Vagina (tissue), 2 donors: ENCODE measurements at regions of chr12 and their contacts with region 1.

Region 1: GRCh38 chr12:40723001-40723400 is 30.8 kb downstream of the CNTN1 start:
- DNase-seq: no peak
- H3K4me3 ChIP-seq: no peak overlapping the region
- H3K27ac ChIP-seq: no peak overlapping the region
- H3K4me1 ChIP-seq: no peaks in the 10 kb centered on the region
- H3K27me3 ChIP-seq: no peaks in the 10 kb centered on the region
- CTCF ChIP-seq: no peak
- POLR2A ChIP-seq: no peak

Region 2: GRCh38 chr12:42356344-42356743 is 1633.3 kb after region 1 on chr12:
- intact Hi-C with region 1: loop called (anchors 5 kb)
- DNase-seq: no peak
- H3K4me3 ChIP-seq: no peak overlapping the region
- H3K27ac ChIP-seq: no peak overlapping the region
- H3K4me1 ChIP-seq: no peaks in the 10 kb centered on the region
- H3K27me3 ChIP-seq: no peaks in the 10 kb centered on the region
- CTCF ChIP-seq: no peak
- POLR2A ChIP-seq: no peak